ENCODE measurements at regions of chr3 and their contacts with region 1.

Region 1: DNA sequence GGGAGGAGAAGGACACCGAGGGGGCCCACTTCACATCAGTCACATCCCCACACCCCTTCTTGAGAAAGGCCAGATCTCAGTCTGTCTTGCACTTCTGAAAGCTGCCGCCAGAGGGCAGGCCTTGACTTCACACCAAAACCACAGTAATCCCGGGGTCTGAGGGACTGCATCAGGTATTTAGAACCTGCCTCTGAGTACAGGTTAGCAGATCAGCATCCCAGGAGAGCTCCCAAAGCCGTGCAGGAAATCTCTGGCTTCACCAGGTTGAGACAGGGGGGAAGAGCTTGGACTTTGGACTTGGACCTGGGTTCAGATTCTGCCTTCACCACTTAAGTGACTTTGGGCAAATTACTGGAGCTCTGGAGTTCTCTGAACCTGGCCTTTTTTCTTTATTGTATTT is 50.3 kb downstream of the LHFPL4 start:
- DNase-seq: peak; percentile 21
- ATAC-seq: peak; percentile 76
- H3K4me3 ChIP-seq: no peak overlapping the region
- H3K27ac ChIP-seq: no peak overlapping the region
- H3K4me1 ChIP-seq: peaks cover 2% of the 10 kb centered on the region; the same call in 1 of the 2 replicates
- H3K27me3 ChIP-seq: peaks cover 1 to 8% of the 10 kb centered on the region in 2 experiments
- CTCF ChIP-seq: peak; percentile 87 to 96 (median 95)
- EP300 ChIP-seq: no peak
- POLR2A ChIP-seq: no peak
- RAD21 ChIP-seq: peak; percentile 91

Region 2: GRCh38 chr3:8579096-8579495 is 924.2 kb before region 1 on chr3:
- CTCF ChIA-PET with region 1: no interaction called
- POLR2A ChIA-PET with region 1: no interaction called
- RAD21 ChIA-PET with region 1: no interaction called
- SMC1A ChIA-PET with region 1: no interaction called
- in situ Hi-C with region 1: no loop called
- intact Hi-C with region 1: no loop called
- DNase-seq: peak; percentile 51
- ATAC-seq: peak; percentile 98
- H3K4me3 ChIP-seq: no peak overlapping the region
- H3K27ac ChIP-seq: no peak overlapping the region
- H3K4me1 ChIP-seq: peaks cover 16% of the 10 kb centered on the region
- H3K27me3 ChIP-seq: no peaks in the 10 kb centered on the region
- CTCF ChIP-seq: no peak
- EP300 ChIP-seq: peak in 1 of 2 experiments; percentile 39; a peak in 1 of 4 replicates
- POLR2A ChIP-seq: no peak
- RAD21 ChIP-seq: no peak

Region 3: DNA sequence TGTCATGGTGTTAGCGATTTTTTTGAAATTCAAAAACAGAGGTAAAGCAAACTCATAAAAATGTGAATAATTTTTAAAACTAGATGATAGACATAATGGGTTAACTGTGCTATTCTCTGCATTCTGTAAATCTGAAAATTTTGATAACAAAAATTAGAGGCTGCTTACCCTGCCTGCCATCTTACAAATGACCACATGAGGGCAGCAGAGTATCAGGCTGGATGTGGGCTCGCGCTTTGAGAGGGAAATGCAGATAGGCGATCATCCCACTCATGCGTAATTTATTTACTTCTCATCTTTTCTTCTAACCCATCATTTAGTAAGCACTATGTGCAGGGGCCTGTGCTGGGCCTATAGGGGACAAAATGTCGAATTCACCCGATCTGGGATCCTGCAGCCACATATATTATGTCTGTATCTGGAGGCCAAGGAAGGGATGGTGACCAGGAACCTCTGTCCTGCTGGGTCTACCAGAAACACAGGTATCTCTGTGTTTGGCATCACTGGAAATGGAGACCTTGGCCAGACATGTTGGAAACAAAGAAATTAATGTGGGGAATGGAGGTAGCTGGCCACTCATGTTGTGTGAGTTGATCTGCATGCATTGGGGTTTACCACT is 532.2 kb before region 1 on chr3:
- CTCF ChIA-PET with region 1: no interaction called
- POLR2A ChIA-PET with region 1: no interaction called
- RAD21 ChIA-PET with region 1: no interaction called
- SMC1A ChIA-PET with region 1: no interaction called
- in situ Hi-C with region 1: no loop called
- intact Hi-C with region 1: loop called (anchors 10 kb)
- DNase-seq: no peak
- ATAC-seq: peak; percentile 84
- H3K4me3 ChIP-seq: no peak overlapping the region
- H3K27ac ChIP-seq: no peak overlapping the region
- H3K4me1 ChIP-seq: no peaks in the 10 kb centered on the region
- H3K27me3 ChIP-seq: no peaks in the 10 kb centered on the region
- CTCF ChIP-seq: peak; percentile 91 to 96 (median 92)
- EP300 ChIP-seq: no peak
- POLR2A ChIP-seq: no peak
- RAD21 ChIP-seq: peak; percentile 97

Region 4: GRCh38 chr3:9491506-9491905 is 11.8 kb before region 1 on chr3:
- CTCF ChIA-PET with region 1: interaction called, 12 read pairs
- POLR2A ChIA-PET with region 1: interaction called, 3 read pairs
- RAD21 ChIA-PET with region 1: interaction called, 3 read pairs
- SMC1A ChIA-PET with region 1: interaction called, 5 read pairs
- in situ Hi-C with region 1: no loop called
- intact Hi-C with region 1: no loop called
- DNase-seq: no peak
- ATAC-seq: no peak
- H3K4me3 ChIP-seq: no peak overlapping the region
- H3K27ac ChIP-seq: no peak overlapping the region
- H3K4me1 ChIP-seq: no peaks in the 10 kb centered on the region
- H3K27me3 ChIP-seq: no peaks in the 10 kb centered on the region
- CTCF ChIP-seq: no peak
- EP300 ChIP-seq: no peak
- POLR2A ChIP-seq: no peak
- RAD21 ChIP-seq: no peak

Region 5: DNA sequence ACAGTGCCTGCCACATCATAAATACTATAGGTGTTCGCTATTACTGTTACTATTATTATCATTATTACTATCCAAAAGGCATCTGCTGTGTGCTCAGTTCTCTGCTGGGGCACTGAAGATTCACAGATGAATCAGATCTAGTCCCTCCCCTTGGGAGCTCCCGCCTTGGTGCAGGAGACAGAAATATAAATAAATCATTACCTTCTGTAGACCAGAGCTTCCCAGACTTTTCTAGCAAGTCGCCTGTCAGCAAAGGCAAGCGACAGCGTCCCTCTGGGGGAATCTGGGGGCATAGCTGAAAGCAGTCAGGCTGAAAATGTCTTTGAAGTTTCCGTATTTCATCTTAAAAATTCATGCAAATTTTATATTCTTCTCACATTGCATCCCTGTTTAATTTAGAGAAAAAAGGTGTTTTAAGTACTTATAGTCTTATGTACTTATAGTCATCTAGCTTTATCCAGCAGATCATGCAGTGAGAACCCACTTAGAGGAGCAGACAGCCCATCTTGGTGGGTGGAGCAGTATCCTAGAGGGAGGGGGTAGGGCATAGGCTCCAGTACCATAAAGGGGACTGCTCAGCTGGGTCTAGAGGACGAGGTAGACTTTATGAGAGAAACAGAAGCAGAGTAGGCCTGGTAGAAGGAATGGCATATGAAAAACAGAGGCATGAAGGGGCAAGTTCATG is 217.9 kb after region 1 on chr3:
- CTCF ChIA-PET with region 1: interaction called, 45 read pairs
- POLR2A ChIA-PET with region 1: no interaction called
- RAD21 ChIA-PET with region 1: no interaction called
- SMC1A ChIA-PET with region 1: interaction called, 5 read pairs
- in situ Hi-C with region 1: loop called (anchors 5 kb)
- intact Hi-C with region 1: no loop called
- DNase-seq: no peak
- ATAC-seq: no peak
- H3K4me3 ChIP-seq: no peak overlapping the region
- H3K27ac ChIP-seq: no peak overlapping the region
- H3K4me1 ChIP-seq: no peaks in the 10 kb centered on the region
- H3K27me3 ChIP-seq: no peaks in the 10 kb centered on the region; a peak in 2 of 4 replicates
- CTCF ChIP-seq: no peak
- EP300 ChIP-seq: no peak
- POLR2A ChIP-seq: no peak
- RAD21 ChIP-seq: no peak

Region 6: GRCh38 chr3:9736831-9737230 is 233.5 kb after region 1 on chr3:
- CTCF ChIA-PET with region 1: interaction called, 15 read pairs
- POLR2A ChIA-PET with region 1: no interaction called
- RAD21 ChIA-PET with region 1: interaction called, 3 read pairs
- SMC1A ChIA-PET with region 1: interaction called, 6 read pairs
- in situ Hi-C with region 1: no loop called
- intact Hi-C with region 1: no loop called
- DNase-seq: no peak
- ATAC-seq: no peak
- H3K4me3 ChIP-seq: no peak overlapping the region
- H3K27ac ChIP-seq: no peak overlapping the region
- H3K4me1 ChIP-seq: peaks cover 12% of the 10 kb centered on the region
- H3K27me3 ChIP-seq: no peaks in the 10 kb centered on the region
- CTCF ChIP-seq: no peak
- EP300 ChIP-seq: no peak
- POLR2A ChIP-seq: no peak
- RAD21 ChIP-seq: no peak

Measured in GM12878 (cell line).